Activated B cell treated with CpG ODN at 0.5 μM for 24 hours (primary cell): ENCODE measurements at regions of chr6 and their contacts with region 1.

Region 1: GRCh38 chr6:139124887-139125672 is 9.8 kb upstream of the HECA start:
- DNase-seq: peak; percentile 42
- ATAC-seq: peak; percentile 100
- H3K4me3 Mint-ChIP-seq: peak overlapping the region; percentile 62
- H3K27ac Mint-ChIP-seq: peak overlapping the region; percentile 88
- H3K4me1 Mint-ChIP-seq: peaks cover 38% of the 10 kb centered on the region
- H3K27me3 Mint-ChIP-seq: no peaks in the 10 kb centered on the region
- CTCF ChIP-seq: no peak

Region 2: DNA sequence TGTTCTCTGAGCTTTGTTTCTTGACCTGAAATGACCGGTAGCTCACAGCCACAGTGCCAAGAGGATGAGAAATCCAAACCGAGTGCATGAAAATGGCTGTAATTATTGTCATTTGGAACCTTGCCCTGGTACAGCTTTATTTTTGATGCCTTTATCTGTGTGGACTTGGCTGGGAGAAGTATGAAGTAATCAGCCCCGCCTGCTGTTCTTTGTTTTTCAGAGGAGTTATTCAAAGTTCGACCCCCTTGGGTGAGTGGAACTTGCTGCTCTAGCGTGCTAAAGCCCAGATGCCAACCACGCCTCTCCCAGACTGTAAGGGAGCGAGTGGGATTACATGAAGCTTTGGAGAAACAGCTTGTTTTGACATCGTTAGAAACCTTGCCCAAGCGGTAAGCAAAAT is 280.9 kb before region 1 on chr6:
- CTCF ChIA-PET with region 1: no interaction called
- POLR2A ChIA-PET with region 1: no interaction called
- intact Hi-C with region 1: no loop called
- DNase-seq: no peak
- ATAC-seq: no peak
- H3K4me3 Mint-ChIP-seq: no peak overlapping the region
- H3K27ac Mint-ChIP-seq: no peak overlapping the region
- H3K4me1 Mint-ChIP-seq: no peaks in the 10 kb centered on the region
- H3K27me3 Mint-ChIP-seq: no peaks in the 10 kb centered on the region
- CTCF ChIP-seq: no peak

Region 3: GRCh38 chr6:139161817-139162284 is 36.8 kb after region 1 on chr6:
- CTCF ChIA-PET with region 1: no interaction called
- POLR2A ChIA-PET with region 1: no interaction called
- intact Hi-C with region 1: loop called (anchors 1 kb)
- DNase-seq: peak; percentile 36
- ATAC-seq: peak; percentile 95
- H3K4me3 Mint-ChIP-seq: peak overlapping the region; percentile 66
- H3K27ac Mint-ChIP-seq: peak overlapping the region; percentile 94
- H3K4me1 Mint-ChIP-seq: peaks cover 77% of the 10 kb centered on the region
- H3K27me3 Mint-ChIP-seq: no peaks in the 10 kb centered on the region
- CTCF ChIP-seq: no peak

Region 4: DNA sequence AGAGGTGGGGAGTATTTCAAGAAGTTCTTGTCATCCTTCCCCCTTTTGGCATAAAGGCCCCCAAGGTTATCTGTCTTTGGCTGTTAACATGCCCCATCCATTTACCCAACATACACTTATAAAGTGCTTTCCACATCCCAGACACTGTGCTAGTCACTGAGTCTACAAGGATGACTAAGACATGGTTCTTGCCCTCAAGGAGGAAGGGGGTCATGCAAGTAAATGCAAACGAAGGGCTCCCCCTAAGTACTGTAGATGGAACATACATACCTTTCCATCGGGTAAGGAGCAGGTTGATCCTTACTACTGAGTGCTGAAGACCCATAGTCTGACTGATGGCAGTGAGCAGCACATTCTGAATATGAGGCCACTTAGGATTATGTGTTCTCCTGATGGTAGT is 48.1 kb after region 1 on chr6:
- CTCF ChIA-PET with region 1: interaction called, 8 read pairs
- POLR2A ChIA-PET with region 1: no interaction called
- intact Hi-C with region 1: loop called (anchors 2 kb)
- DNase-seq: no peak
- ATAC-seq: peak; percentile 72
- H3K4me3 Mint-ChIP-seq: no peak overlapping the region
- H3K27ac Mint-ChIP-seq: peak overlapping the region; percentile 46
- H3K4me1 Mint-ChIP-seq: peaks cover 71% of the 10 kb centered on the region
- H3K27me3 Mint-ChIP-seq: no peaks in the 10 kb centered on the region
- CTCF ChIP-seq: no peak

Region 5: GRCh38 chr6:139250296-139251044 is 125.4 kb after region 1 on chr6:
- CTCF ChIA-PET with region 1: interaction called, 8 read pairs
- POLR2A ChIA-PET with region 1: no interaction called
- intact Hi-C with region 1: loop called (anchors 1 kb)
- DNase-seq: peak; percentile 32
- ATAC-seq: peak; percentile 100
- H3K4me3 Mint-ChIP-seq: no peak overlapping the region
- H3K27ac Mint-ChIP-seq: no peak overlapping the region
- H3K4me1 Mint-ChIP-seq: peaks cover 12% of the 10 kb centered on the region
- H3K27me3 Mint-ChIP-seq: no peaks in the 10 kb centered on the region
- CTCF ChIP-seq: no peak

Region 6: GRCh38 chr6:139369568-139370282 is 244.6 kb after region 1 on chr6:
- CTCF ChIA-PET with region 1: interaction called, 38 read pairs
- POLR2A ChIA-PET with region 1: interaction called, 16 read pairs
- intact Hi-C with region 1: loop called (anchors 1 kb)
- DNase-seq: no peak
- ATAC-seq: no peak
- H3K4me3 Mint-ChIP-seq: no peak overlapping the region
- H3K27ac Mint-ChIP-seq: peak overlapping the region; percentile 4
- H3K4me1 Mint-ChIP-seq: peaks cover 27% of the 10 kb centered on the region
- H3K27me3 Mint-ChIP-seq: no peaks in the 10 kb centered on the region
- CTCF ChIP-seq: no peak